ENCODE measurements at regions of chr13 and their contacts with region 1.

Region 1: DNA sequence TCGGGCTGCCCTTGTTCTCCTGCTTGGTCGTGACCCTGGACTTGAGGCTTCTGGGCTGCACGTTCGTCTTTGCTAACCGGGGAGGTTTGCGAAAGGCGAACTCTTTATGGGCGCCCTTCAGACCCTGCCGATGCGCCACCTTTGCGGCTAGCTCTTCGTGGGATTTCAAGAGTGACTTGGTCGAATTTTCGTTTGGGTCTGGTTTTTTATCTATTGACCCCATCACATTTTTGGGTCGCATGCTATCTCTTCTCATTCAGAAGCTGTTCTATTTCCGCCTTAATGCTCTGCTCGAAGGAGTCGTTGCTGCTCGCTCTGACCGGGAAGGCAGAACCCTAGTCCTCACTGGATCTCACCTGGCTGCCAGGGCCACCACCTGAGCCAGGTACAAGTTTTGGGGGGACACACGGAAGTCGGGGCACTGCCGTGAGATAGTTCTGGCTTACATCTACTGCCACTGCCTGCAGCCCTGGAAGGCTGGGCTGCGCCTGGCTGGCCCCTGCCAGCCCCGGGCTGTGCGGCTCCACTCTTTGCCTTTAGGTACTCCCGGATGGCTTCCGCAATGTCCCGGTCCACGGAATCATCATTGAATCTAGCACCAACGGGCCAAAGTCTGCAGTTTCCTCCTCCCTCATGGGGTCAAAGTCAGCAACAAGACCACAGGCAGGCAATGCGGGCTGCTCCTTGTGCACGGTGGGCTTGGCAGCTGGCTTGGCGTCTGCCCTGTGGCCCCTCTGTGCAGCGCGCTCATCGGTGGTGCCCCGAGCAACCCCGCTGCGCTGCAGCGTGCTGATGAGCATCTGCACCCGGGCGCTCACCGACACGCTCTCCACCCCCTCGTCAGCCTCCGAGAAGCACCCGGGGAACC is 16.2 kb downstream of the RB1 start:
- DNase-seq: peak in 1 of 3 donors; percentile 8
- H3K4me3 ChIP-seq: peak overlapping the region in 2 of 3 experiments; percentile 33 to 74
- H3K4me3 Mint-ChIP-seq: peak overlapping the region; percentile 75 to 95
- H3K27ac ChIP-seq: no peak overlapping the region
- H3K27ac Mint-ChIP-seq: peak overlapping the region in 4 of 7 donors; percentile 14 to 68 (median 47)
- H3K4me1 ChIP-seq: peaks cover 34 to 37% of the 10 kb centered on the region in 2 donors
- H3K4me1 Mint-ChIP-seq: peaks cover 38% of the 10 kb centered on the region
- H3K27me3 ChIP-seq: peaks cover 0 to 24% of the 10 kb centered on the region in 2 donors
- H3K27me3 Mint-ChIP-seq: peaks cover 17 to 52% (median 28%) of the 10 kb centered on the region in 3 donors
- CTCF ChIP-seq: no peak

Region 2: GRCh38 chr13:48532506-48533499 is 213.0 kb after region 1 on chr13 and contains the start of gene RCBTB2:
- intact Hi-C with region 1: loop called in 1 of 2 experiments (anchors 10 kb)
- DNase-seq: peak; percentile 98 to 99 (median 99)
- H3K4me3 ChIP-seq: peak within 1 kb of the TSS; percentile 77 to 88 (median 83)
- H3K4me3 Mint-ChIP-seq: peak within 1 kb of the TSS; percentile 91 to 94
- H3K27ac ChIP-seq: peak within 1 kb of the TSS; percentile 97
- H3K27ac Mint-ChIP-seq: peak within 1 kb of the TSS; percentile 95 to 99 (median 97)
- H3K4me1 ChIP-seq: peaks cover 67 to 86% of the 10 kb centered on the region in 2 donors
- H3K4me1 Mint-ChIP-seq: peaks cover 71% of the 10 kb centered on the region
- H3K27me3 ChIP-seq: no peaks in the 10 kb centered on the region
- H3K27me3 Mint-ChIP-seq: no peaks in the 10 kb centered on the region
- CTCF ChIP-seq: no peak
- polyA plus RNA-seq, gene RCBTB2: 55.5 to 100 (median 64.4) TPM

Region 3: DNA sequence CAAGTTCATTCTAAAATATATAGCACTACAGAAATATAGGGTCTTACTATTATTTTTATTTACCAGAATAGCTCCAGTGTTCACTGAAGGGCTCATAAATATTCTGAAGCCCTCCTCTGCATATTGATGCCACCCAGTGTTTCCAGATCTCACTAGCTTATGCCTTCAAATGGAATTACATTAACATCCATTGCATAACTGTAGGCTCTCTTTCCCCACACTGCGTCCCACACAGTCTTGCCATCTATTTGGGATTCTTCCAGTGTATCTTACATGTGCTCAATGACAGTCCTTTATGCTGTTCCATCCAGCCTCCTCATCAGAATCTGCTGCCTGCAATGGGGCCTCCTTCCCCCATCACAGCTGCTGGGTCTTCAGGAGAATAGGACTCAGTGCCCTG is 471.2 kb after region 1 on chr13:
- intact Hi-C with region 1: no loop called
- DNase-seq: no peak
- H3K4me3 ChIP-seq: peak overlapping the region in 1 of 3 experiments; percentile 9
- H3K4me3 Mint-ChIP-seq: no peak overlapping the region
- H3K27ac ChIP-seq: peak overlapping the region; percentile 43 to 89
- H3K27ac Mint-ChIP-seq: peak overlapping the region; percentile 90 to 97 (median 97)
- H3K4me1 ChIP-seq: peaks cover 17 to 21% of the 10 kb centered on the region in 2 donors
- H3K4me1 Mint-ChIP-seq: peaks cover 26% of the 10 kb centered on the region
- H3K27me3 ChIP-seq: no peaks in the 10 kb centered on the region
- H3K27me3 Mint-ChIP-seq: peaks cover 0 to 2% (median 0%) of the 10 kb centered on the region in 3 donors
- CTCF ChIP-seq: no peak

Measured in CD14-positive monocyte (primary cell).